ENCODE measurements at regions of chr1 and their contacts with region 1.

Region 1: DNA sequence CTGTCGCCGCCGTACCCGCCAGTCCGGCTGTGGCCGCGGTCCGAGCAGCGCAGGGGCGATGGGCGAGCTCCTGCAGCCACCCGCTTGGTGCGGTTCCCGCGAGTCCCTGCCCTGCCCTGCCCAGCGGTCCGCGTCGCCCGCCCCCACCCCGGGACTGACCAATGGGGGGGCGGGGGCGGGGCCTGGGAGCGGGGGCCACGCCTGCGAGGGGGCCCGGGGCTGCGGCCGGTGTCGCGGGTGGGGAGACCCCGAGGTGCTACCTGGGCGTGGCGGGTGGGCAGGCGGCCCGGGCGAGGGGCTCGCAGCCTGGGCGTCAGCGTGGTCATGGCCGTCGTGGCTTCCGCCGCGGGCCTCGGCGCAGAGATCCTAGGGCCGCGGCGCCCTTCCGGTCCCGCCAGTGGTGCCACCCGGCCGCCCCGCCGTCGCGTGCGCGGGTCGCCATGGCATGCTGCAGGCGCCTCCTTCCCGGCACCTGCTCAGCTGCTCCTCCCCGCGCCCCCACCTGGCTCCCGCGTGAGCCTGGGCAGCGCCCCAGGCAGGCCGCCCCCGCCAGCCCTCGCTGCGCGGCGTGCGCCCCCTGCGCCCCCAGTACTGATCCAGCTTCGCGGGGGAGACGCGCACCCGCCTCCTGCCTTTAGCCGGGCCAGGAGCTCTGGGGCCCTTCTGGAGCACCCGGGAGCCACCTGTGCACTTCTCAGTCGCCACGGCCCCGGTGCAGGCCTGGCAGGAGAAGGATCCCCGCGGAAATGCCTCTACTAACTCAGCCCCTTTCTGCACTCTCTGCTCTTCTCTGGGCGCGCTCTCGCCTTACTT is at the start of gene BMP8B:
- DNase-seq: peak; percentile 19
- H3K4me3 Mint-ChIP-seq: peak within 1 kb of the TSS; percentile 82
- H3K27ac Mint-ChIP-seq: peak within 1 kb of the TSS; percentile 34
- H3K4me1 Mint-ChIP-seq: peaks cover 13% of the 10 kb centered on the region
- H3K27me3 Mint-ChIP-seq: peaks cover 43% of the 10 kb centered on the region
- total RNA-seq, gene BMP8B: 0.31 and 0.42 TPM in 2 replicates

Region 2: GRCh38 chr1:39491146-39491921 is 297.6 kb before region 1 on chr1 and contains the start of gene BMP8A:
- intact Hi-C with region 1: loop called (anchors 10 kb)
- DNase-seq: peak; percentile 69
- H3K4me3 Mint-ChIP-seq: peak within 1 kb of the TSS; percentile 75
- H3K27ac Mint-ChIP-seq: no peak within 1 kb of the TSS
- H3K4me1 Mint-ChIP-seq: peaks cover 11% of the 10 kb centered on the region
- H3K27me3 Mint-ChIP-seq: peaks cover 30% of the 10 kb centered on the region
- total RNA-seq, gene BMP8A: not detected in 2 replicates

Region 3: GRCh38 chr1:39995973-39996393 is 207.0 kb after region 1 on chr1:
- intact Hi-C with region 1: no loop called
- DNase-seq: no peak
- H3K4me3 Mint-ChIP-seq: no peak overlapping the region
- H3K27ac Mint-ChIP-seq: no peak overlapping the region
- H3K4me1 Mint-ChIP-seq: peaks cover 5% of the 10 kb centered on the region
- H3K27me3 Mint-ChIP-seq: no peaks in the 10 kb centered on the region